CD14-positive monocyte (primary cell): ENCODE measurements at regions of chr2 and their contacts with region 1.

Region 1: GRCh38 chr2:101473911-101474701 is 806 bp downstream of the RFX8 start:
- DNase-seq: peak; percentile 35 to 63 (median 44)
- H3K4me3 ChIP-seq: peak overlapping the region; percentile 26 to 73 (median 42)
- H3K4me3 Mint-ChIP-seq: peak overlapping the region; percentile 79 to 89
- H3K27ac ChIP-seq: no peak overlapping the region
- H3K27ac Mint-ChIP-seq: peak overlapping the region in 5 of 7 donors; percentile 5 to 81 (median 46)
- H3K4me1 ChIP-seq: peaks cover 35 to 45% of the 10 kb centered on the region in 2 donors
- H3K4me1 Mint-ChIP-seq: peaks cover 46% of the 10 kb centered on the region
- H3K27me3 ChIP-seq: peaks cover 54 to 55% of the 10 kb centered on the region in 2 donors
- H3K27me3 Mint-ChIP-seq: peaks cover 60 to 82% (median 77%) of the 10 kb centered on the region in 3 donors
- CTCF ChIP-seq: no peak

Region 2: DNA sequence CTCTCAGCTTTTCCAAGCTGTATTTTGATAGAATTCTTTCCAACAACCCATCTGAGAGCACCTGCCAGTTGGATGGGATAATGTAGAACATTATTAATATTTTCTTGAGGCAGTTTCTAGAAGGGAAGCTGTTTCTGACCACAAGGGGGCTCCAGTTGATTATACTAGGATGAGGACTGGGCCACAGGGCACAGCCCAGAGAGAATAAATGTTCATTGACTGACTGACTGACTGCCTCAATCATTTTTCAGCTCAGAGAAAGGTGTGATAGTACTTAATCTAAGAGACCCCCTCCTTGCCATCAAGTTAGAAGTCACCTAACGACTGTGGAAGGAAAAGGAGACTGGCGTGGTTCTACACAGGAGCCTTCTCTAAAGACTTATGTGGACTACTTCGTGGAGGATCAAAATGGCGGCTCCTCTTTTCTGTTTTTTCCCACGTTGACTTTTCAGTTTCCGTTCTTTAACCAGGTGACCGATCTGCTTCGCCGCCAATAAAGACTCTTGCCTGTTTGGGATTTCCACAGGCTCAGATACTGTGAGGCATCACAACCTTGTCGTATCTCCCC is 54.9 kb before region 1 on chr2:
- intact Hi-C with region 1: loop called in 1 of 2 experiments (anchors 10 kb)
- DNase-seq: peak; percentile 51 to 73 (median 72)
- H3K4me3 ChIP-seq: no peak overlapping the region
- H3K4me3 Mint-ChIP-seq: no peak overlapping the region
- H3K27ac ChIP-seq: no peak overlapping the region
- H3K27ac Mint-ChIP-seq: peak overlapping the region in 1 of 7 donors; percentile 44
- H3K4me1 ChIP-seq: peaks cover 9 to 10% of the 10 kb centered on the region in 2 donors
- H3K4me1 Mint-ChIP-seq: peaks cover 12% of the 10 kb centered on the region
- H3K27me3 ChIP-seq: no peaks in the 10 kb centered on the region
- H3K27me3 Mint-ChIP-seq: peaks cover 0 to 1% (median 0%) of the 10 kb centered on the region in 3 donors
- CTCF ChIP-seq: peak; percentile 79

Region 3: GRCh38 chr2:101446869-101447268 is 27.2 kb before region 1 on chr2:
- intact Hi-C with region 1: loop called in 1 of 2 experiments (anchors 5 kb)
- DNase-seq: peak; percentile 82 to 94 (median 88)
- H3K4me3 ChIP-seq: no peak overlapping the region
- H3K4me3 Mint-ChIP-seq: peak overlapping the region in 1 of 2 donors; percentile 72
- H3K27ac ChIP-seq: no peak overlapping the region
- H3K27ac Mint-ChIP-seq: peak overlapping the region; percentile 8 to 87 (median 64)
- H3K4me1 ChIP-seq: peaks cover 20 to 25% of the 10 kb centered on the region in 2 donors
- H3K4me1 Mint-ChIP-seq: peaks cover 31% of the 10 kb centered on the region
- H3K27me3 ChIP-seq: peaks cover 3 to 19% of the 10 kb centered on the region in 2 donors
- H3K27me3 Mint-ChIP-seq: peaks cover 24 to 44% (median 42%) of the 10 kb centered on the region in 3 donors
- CTCF ChIP-seq: no peak